Natural killer cell (primary cell): ENCODE measurements at regions of chr20 and their contacts with region 1.

Region 1: DNA sequence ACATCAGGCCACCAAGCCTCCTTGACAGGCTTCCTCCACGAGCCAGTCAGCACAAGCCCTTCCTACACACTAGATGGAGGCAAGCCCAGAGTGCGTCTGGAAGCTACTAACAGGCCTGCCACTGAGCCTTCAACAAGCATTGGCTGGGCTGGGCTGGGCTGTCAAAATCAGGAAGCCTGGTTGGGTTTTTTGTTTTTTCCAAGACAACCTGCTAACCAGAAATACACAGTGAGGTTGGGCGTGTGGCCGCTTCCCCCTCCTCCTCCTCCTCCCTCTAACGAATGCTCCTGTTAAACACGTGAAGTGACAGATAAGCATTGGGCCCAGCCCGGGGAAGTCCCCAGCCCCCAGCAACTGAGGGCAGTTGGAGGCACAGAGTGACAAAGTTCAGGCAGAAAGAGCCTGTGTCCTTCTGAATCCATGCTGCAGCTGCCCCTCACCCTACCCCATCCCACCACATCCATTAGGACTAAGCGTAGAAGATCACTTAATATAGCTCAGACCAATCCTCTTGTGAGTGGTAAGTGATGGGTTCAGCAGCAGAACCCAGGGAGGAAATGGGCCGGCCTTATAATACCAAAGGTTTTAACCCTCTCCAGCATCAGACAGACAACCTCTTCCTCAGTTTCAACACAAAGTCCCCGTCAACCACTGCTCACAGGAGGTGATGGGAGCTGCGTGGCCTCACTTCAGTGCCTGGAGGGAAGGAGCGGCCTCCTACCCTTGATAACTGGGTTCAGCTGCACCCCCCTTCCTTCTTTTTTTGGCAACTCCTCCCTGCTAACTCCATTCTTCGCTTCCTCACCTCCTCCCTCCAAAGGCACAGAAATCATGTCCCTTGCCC is 1.1 kb downstream of the NFATC2 start:
- DNase-seq: peak; percentile 81 to 94
- ATAC-seq: peak; percentile 70 to 86 (median 79)
- H3K4me3 ChIP-seq: peak overlapping the region; percentile 93
- H3K4me3 Mint-ChIP-seq: peak overlapping the region; percentile 99
- H3K27ac ChIP-seq: peak overlapping the region; percentile 91
- H3K27ac Mint-ChIP-seq: peak overlapping the region; percentile 95 to 100
- H3K4me1 ChIP-seq: peaks cover 50% of the 10 kb centered on the region
- H3K4me1 Mint-ChIP-seq: peaks cover 61 to 75% of the 10 kb centered on the region in 2 donors
- H3K27me3 ChIP-seq: no peaks in the 10 kb centered on the region
- H3K27me3 Mint-ChIP-seq: peaks cover 0 to 5% of the 10 kb centered on the region in 2 donors
- CTCF ChIP-seq: no peak

Region 2: DNA sequence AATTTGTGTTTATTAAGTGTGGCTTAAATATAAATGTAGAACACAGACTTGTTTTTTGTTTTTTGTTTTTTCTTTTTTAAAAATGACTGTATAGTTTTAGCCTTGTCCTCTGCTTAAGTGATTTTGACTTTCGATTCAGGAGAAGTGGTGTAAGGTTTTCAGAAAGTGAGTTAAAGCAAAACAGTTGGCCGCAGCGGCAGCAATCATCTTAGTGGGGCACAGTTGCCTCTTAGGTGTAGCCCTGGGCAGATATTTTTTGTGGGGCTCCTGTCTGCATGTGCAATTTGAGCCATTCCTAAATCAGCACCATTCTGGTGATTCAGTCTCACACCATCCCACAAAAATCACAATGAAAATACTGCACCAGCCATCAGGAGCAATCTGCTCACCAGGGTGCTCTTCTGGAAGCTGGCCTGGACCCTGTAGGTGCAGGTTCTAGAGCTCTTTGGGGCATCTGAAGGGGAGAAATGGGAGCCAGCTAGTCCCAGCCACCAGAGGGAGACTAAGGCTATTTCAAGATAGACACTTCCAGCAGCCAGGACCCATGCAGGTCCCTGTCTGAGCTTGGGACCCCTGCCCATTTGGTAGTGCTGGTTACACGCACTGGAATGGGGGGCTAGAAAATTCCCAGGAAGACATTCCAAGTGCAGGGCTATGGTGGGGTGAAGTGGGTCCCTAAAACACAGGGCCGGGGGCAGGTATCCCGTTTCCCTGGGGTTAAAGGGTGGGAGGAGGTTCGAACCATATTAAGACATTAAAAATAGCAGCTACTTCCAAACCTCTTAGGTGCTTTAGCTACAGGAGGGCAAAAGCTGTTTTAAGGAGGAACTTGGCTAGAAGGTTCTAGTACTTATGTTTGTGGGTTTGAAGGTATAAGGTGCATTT is 155.5 kb before region 1 on chr20:
- intact Hi-C with region 1: loop called (anchors 5 kb)
- DNase-seq: peak in 1 of 2 donors; percentile 69
- ATAC-seq: peak in 2 of 3 donors; percentile 32 to 45
- H3K4me3 ChIP-seq: no peak overlapping the region
- H3K4me3 Mint-ChIP-seq: peak overlapping the region; percentile 25
- H3K27ac ChIP-seq: peak overlapping the region; percentile 26
- H3K27ac Mint-ChIP-seq: peak overlapping the region; percentile 80 to 86
- H3K4me1 ChIP-seq: peaks cover 48% of the 10 kb centered on the region
- H3K4me1 Mint-ChIP-seq: peaks cover 74 to 76% of the 10 kb centered on the region in 2 donors
- H3K27me3 ChIP-seq: no peaks in the 10 kb centered on the region
- H3K27me3 Mint-ChIP-seq: no peaks in the 10 kb centered on the region
- CTCF ChIP-seq: peak; percentile 53

Region 3: DNA sequence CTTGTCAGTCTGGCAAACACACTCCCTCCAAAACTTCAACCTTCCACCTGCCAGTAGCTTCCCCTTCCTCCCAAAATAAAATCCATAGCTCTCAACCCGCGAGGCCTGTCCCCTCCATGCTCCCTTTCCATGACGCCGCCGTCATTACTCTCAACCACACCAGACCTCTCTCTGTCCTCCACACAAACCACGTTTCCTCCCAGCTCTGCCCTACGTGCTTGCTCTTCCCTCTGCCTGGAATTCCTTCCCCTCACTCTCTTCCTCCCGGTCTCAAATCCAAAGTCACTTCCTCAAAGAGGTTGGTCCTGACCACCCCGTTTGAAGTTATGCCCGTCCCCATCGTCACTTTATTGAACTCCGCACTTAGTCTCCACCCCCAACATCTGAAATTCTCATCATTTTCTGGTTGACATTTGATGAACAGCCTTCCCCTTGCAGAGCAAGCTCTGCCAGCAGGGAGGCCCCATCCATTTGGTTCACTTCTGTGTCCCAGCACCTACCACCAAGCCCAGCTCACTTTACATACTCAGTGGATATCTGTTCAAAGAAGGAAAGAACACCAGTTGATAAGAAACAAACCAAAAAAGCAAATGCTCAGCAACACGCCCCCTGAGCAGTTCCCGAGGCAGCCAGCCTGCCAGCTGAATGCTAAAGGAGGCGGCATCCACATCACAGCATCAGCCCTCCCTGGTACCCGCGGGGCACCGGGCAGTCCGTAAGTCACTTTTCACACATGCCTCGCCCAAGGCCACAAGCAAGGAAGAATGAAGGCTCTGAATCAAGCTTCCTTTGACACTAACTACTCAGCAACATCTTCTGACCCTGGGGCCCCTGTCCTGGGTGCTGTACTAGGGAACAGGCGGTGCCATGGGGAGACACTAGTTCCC is 123.9 kb before region 1 on chr20:
- intact Hi-C with region 1: loop called (anchors 5 kb)
- DNase-seq: peak; percentile 55 to 74
- ATAC-seq: peak; percentile 60 to 61 (median 60)
- H3K4me3 ChIP-seq: no peak overlapping the region
- H3K4me3 Mint-ChIP-seq: peak overlapping the region; percentile 85
- H3K27ac ChIP-seq: peak overlapping the region; percentile 79
- H3K27ac Mint-ChIP-seq: peak overlapping the region; percentile 94 to 95
- H3K4me1 ChIP-seq: peaks cover 63% of the 10 kb centered on the region
- H3K4me1 Mint-ChIP-seq: peaks cover 69 to 76% of the 10 kb centered on the region in 2 donors
- H3K27me3 ChIP-seq: no peaks in the 10 kb centered on the region
- H3K27me3 Mint-ChIP-seq: no peaks in the 10 kb centered on the region
- CTCF ChIP-seq: no peak

Region 4: GRCh38 chr20:51500311-51500710 is 41.1 kb before region 1 on chr20:
- intact Hi-C with region 1: loop called (anchors 1 kb)
- DNase-seq: peak; percentile 49 to 86
- ATAC-seq: peak; percentile 79 to 90 (median 83)
- H3K4me3 ChIP-seq: no peak overlapping the region
- H3K4me3 Mint-ChIP-seq: peak overlapping the region; percentile 88
- H3K27ac ChIP-seq: peak overlapping the region; percentile 87
- H3K27ac Mint-ChIP-seq: peak overlapping the region; percentile 95 to 99
- H3K4me1 ChIP-seq: peaks cover 82% of the 10 kb centered on the region
- H3K4me1 Mint-ChIP-seq: peaks cover 92 to 93% of the 10 kb centered on the region in 2 donors
- H3K27me3 ChIP-seq: no peaks in the 10 kb centered on the region
- H3K27me3 Mint-ChIP-seq: no peaks in the 10 kb centered on the region
- CTCF ChIP-seq: no peak

Region 5: GRCh38 chr20:51525241-51526129 is 15.9 kb before region 1 on chr20:
- intact Hi-C with region 1: loop called (anchors 1 kb)
- DNase-seq: peak; percentile 74 to 79
- ATAC-seq: peak; percentile 69 to 89 (median 85)
- H3K4me3 ChIP-seq: no peak overlapping the region
- H3K4me3 Mint-ChIP-seq: peak overlapping the region; percentile 72
- H3K27ac ChIP-seq: peak overlapping the region; percentile 90
- H3K27ac Mint-ChIP-seq: peak overlapping the region; percentile 95 to 100
- H3K4me1 ChIP-seq: peaks cover 65% of the 10 kb centered on the region
- H3K4me1 Mint-ChIP-seq: peaks cover 82 to 86% of the 10 kb centered on the region in 2 donors
- H3K27me3 ChIP-seq: no peaks in the 10 kb centered on the region
- H3K27me3 Mint-ChIP-seq: no peaks in the 10 kb centered on the region
- CTCF ChIP-seq: no peak

Region 6: DNA sequence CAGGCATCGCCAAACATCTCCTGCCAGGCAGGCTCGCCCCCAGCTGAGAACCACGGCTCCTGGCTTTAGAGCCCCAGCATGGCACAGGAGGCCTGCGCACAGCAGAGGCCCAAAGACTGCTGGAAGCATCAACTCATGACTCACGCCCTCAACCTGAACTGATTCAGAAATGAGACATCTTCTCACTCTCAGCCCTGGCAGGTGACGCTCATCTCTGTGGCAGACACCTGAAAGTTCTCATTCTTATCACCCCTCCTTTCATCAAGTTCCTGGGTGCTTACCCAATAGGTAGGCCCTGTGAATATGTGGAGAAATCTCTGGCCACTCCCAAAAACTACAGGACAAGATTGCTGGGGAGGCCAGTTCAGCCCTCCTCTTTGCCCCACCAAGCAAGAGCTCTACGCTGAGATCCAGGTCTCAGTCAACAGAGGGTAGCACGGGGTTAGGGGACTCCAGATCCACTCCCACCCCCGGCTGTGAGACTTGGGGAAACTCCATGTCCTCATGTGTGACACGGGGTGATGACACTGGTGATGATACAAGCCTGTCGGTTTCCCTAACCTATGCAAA is 10.2 kb before region 1 on chr20:
- intact Hi-C with region 1: loop called (anchors 1 kb)
- DNase-seq: peak; percentile 68 to 85
- ATAC-seq: peak; percentile 64 to 69 (median 66)
- H3K4me3 ChIP-seq: no peak overlapping the region
- H3K4me3 Mint-ChIP-seq: peak overlapping the region; percentile 87
- H3K27ac ChIP-seq: peak overlapping the region; percentile 83
- H3K27ac Mint-ChIP-seq: peak overlapping the region; percentile 95 to 100
- H3K4me1 ChIP-seq: peaks cover 95% of the 10 kb centered on the region
- H3K4me1 Mint-ChIP-seq: peaks cover 94 to 100% of the 10 kb centered on the region in 2 donors
- H3K27me3 ChIP-seq: no peaks in the 10 kb centered on the region
- H3K27me3 Mint-ChIP-seq: no peaks in the 10 kb centered on the region
- CTCF ChIP-seq: no peak

Region 7: DNA sequence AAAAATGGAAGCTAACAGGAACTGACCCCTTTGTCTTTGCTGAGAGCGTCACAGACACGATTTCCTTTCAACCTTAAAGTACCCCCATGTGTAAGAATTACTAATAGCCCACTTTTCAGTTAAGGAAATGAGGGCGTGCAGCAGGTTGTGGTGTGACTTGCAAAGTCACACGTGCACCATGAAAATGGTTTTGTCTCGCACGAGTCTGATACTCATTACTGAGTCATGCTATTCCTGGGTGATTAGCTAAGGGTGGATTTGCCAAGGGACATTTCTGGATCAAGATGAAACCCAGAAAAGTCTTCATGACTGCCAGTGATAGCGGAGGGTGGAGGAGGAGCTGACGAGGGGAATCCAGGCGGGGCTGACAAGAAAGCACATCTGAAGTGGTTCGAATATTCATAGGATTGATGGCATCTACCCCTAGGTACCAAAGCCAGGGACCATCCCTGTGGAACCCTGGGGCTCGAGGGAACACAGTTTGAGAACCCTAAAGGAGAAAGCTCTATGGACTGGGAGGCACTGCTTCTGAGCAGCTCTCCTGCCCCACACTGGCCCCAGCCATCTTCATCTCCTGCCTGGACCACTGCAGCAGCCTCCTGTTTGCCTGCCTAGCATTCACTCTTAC is 13.2 kb after region 1 on chr20:
- intact Hi-C with region 1: loop called (anchors 1 kb)
- DNase-seq: peak; percentile 35 to 66
- ATAC-seq: peak; percentile 87 to 91 (median 90)
- H3K4me3 ChIP-seq: no peak overlapping the region
- H3K4me3 Mint-ChIP-seq: peak overlapping the region; percentile 11
- H3K27ac ChIP-seq: no peak overlapping the region
- H3K27ac Mint-ChIP-seq: peak overlapping the region; percentile 24 to 59
- H3K4me1 ChIP-seq: peaks cover 18% of the 10 kb centered on the region
- H3K4me1 Mint-ChIP-seq: peaks cover 24 to 27% of the 10 kb centered on the region in 2 donors
- H3K27me3 ChIP-seq: peaks cover 10% of the 10 kb centered on the region
- H3K27me3 Mint-ChIP-seq: peaks cover 3 to 10% of the 10 kb centered on the region in 2 donors
- CTCF ChIP-seq: no peak